Panc1 (cell line): ENCODE measurements at regions of chr6 and their contacts with region 1.

Region 1: GRCh38 chr6:98039869-98040607 is 757.0 kb upstream of the MMS22L start:
- DNase-seq: no peak
- ATAC-seq: no peak
- H3K4me3 ChIP-seq: no peak overlapping the region
- H3K27ac ChIP-seq: no peak overlapping the region
- H3K4me1 ChIP-seq: no peaks in the 10 kb centered on the region
- H3K27me3 ChIP-seq: no peaks in the 10 kb centered on the region; the same call in 1 of the 2 replicates
- CTCF ChIP-seq: no peak

Region 2: DNA sequence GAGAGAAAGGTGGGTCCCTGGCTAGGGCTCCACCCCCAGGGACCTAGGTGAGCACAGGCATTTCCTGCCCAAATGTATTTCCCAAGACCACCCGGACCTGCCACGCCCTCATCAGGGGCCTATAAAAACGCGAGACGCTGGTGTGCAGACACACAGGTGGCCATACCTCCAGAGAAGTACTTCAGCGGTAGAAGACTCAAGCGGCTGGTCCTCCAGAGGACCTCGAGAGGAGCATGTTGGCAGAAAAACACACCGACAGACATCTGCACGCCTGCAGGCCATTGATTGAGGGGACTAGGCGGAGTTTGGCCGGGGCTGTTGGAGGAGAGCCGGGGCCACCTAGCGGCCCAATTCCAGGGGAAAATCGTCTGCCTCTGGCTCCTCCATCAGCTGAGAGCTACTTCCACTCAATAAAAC is 61.2 kb before region 1 on chr6:
- CTCF ChIA-PET with region 1: interaction called, 16 read pairs
- POLR2A ChIA-PET with region 1: no interaction called
- in situ Hi-C with region 1: no loop called
- intact Hi-C with region 1: no loop called
- DNase-seq: no peak
- ATAC-seq: no peak; the same call in 1 of the 2 replicates
- H3K4me3 ChIP-seq: no peak overlapping the region
- H3K27ac ChIP-seq: no peak overlapping the region
- H3K4me1 ChIP-seq: no peaks in the 10 kb centered on the region
- H3K27me3 ChIP-seq: no peaks in the 10 kb centered on the region
- CTCF ChIP-seq: peak; percentile 22

Region 3: DNA sequence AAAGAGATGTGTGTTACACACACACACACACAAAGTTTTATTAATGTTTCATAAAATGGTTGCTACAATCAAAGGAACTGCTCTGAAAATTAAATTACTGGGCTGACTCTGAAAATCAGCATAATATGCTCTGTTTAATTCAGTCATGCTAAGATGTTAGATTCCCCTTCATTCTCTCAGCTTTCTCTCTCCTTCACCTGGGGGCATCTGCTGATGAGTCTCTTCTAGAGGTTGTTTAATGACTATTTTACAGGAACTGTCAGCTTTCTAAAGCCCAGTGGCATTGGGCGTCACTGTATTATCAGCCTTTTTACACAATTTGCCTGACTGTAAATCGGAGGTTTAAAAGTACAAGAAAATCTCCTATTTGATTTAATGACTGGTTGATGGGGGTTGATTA is 234.7 kb after region 1 on chr6:
- CTCF ChIA-PET with region 1: no interaction called
- POLR2A ChIA-PET with region 1: no interaction called
- in situ Hi-C with region 1: no loop called
- intact Hi-C with region 1: no loop called
- DNase-seq: no peak
- ATAC-seq: no peak
- H3K4me3 ChIP-seq: no peak overlapping the region
- H3K27ac ChIP-seq: no peak overlapping the region
- H3K4me1 ChIP-seq: no peaks in the 10 kb centered on the region
- H3K27me3 ChIP-seq: no peaks in the 10 kb centered on the region
- CTCF ChIP-seq: no peak

Region 4: DNA sequence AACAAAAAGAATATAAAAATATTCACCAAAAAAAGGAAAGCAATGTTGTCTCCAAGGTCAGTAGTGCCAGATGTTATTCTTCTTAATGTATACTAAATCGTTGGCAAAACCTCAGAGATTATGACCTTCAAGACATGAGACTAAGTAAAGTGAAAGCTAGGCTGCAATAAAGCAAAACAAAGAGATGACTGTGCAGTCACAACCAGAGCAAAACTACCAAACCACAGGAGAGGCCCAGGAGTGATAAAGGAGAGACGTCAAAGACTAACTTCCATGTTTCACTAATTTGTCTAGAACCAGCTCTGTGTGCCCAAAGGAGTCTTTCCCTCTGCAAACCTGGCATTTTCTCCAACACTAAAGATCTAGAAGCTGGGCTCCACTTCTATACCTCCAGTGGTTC is 638.4 kb after region 1 on chr6:
- CTCF ChIA-PET with region 1: no interaction called
- POLR2A ChIA-PET with region 1: no interaction called
- in situ Hi-C with region 1: no loop called
- intact Hi-C with region 1: no loop called
- DNase-seq: no peak
- ATAC-seq: no peak
- H3K4me3 ChIP-seq: no peak overlapping the region
- H3K27ac ChIP-seq: no peak overlapping the region
- H3K4me1 ChIP-seq: no peaks in the 10 kb centered on the region
- H3K27me3 ChIP-seq: no peaks in the 10 kb centered on the region
- CTCF ChIP-seq: no peak

Region 5: DNA sequence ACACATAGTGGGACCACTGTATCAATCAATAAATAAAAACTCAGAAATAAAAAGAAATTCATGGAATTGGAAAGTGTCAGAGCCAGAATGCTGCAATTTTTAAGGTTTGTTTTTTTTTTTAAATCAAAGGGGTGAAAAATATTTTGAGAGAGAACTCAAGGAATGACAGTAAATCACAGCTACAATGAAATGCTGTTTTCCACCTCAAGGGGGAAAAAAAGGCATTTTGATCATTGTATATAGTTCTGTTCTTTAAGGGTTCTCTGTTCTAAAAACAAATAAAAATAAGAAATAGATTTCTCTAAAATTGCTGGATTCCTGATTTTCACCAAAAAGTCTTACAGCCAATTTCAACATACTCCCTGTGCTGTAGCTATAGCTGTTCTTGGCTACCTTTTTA is 1285.0 kb after region 1 on chr6:
- CTCF ChIA-PET with region 1: no interaction called
- POLR2A ChIA-PET with region 1: no interaction called
- in situ Hi-C with region 1: no loop called
- intact Hi-C with region 1: no loop called
- DNase-seq: no peak
- ATAC-seq: no peak
- H3K4me3 ChIP-seq: no peak overlapping the region
- H3K27ac ChIP-seq: no peak overlapping the region
- H3K4me1 ChIP-seq: no peaks in the 10 kb centered on the region
- H3K27me3 ChIP-seq: no peaks in the 10 kb centered on the region
- CTCF ChIP-seq: no peak